ENCODE measurements at regions of chr1 and their contacts with region 1.

Region 1: DNA sequence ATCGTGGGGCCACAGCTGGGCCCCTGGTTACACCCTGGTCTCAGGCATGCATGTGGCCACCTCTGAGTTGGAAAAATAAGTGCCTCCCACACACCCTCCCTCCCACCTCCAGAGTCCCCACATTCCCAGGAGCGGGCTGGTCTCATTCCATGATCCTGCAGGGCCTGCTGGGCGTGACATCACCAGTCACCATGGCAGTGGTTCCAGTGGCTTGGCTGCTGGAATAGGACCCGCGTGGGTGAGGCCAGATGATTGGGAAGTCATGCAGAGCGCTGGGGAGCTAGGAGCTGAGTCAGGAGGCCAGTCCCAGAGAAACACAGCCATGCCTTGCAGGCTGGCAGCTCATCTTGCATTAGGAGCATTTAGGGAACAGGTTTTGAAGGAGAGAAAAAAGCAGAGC is 125.4 kb upstream of the TMEM51 start:
- H3K4me3 ChIP-seq: no peak overlapping the region
- H3K27ac ChIP-seq: no peak overlapping the region
- H3K4me1 ChIP-seq: no peaks in the 10 kb centered on the region
- CTCF ChIP-seq: no peak

Region 2: DNA sequence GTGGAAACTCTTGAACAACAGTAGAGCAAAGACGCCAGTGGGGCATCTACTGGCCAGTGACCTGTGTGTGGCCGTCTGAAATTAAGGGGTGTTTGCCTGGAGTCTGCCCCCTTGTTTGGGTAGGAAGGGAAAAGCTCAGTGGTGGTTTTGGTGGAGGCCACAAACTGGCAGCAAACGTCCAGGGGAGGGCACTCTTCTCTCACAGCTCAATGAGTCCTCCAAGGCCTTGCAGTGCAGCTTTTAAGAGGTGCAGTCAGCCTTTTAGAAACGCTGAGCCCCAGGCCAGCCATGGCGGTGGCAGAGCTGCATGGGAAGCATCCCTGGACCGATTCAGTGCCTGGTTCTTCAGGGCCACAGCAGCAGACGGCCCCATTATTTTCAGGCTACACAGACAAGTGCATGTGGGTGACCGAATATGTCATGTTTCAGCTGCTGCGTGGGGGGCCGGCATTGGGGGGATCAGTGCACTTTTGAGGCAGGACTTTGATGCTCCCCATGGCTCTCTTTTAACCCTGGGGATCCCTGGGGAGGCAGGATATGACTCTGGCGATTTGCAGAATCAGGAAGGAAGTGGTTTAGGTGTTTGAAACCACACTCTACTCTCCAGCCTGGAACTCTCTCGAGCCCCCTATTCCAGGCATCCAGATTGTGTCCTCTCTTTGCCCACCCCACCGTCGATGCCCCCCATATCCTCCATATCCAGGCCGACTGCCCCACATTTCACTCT is 914.1 kb before region 1 on chr1:
- CTCF ChIA-PET with region 1: interaction called, 10 read pairs
- POLR2A ChIA-PET with region 1: no interaction called
- H3K4me3 ChIP-seq: no peak overlapping the region
- H3K27ac ChIP-seq: no peak overlapping the region
- H3K4me1 ChIP-seq: no peaks in the 10 kb centered on the region
- CTCF ChIP-seq: peak; percentile 31; the same call in 1 of the 2 replicates

Region 3: DNA sequence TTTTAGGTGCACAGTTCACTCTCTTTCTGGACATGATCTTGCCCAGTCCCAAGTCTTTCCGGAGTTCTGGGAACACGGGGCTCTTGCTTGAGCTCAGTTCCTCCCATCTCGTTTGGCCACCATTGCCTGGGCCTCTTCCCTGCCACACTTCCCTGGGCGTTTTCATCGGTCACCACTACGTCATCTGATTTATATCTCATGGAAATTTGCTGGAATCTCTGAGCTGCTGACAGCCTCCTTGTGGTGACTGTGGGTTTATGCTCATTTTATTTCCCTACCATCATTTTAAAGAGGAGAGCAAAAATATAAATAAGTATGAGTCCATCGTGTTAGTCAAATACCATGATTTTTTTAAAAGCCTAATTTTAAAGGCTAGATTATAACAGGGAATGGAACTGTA is 878.7 kb before region 1 on chr1:
- CTCF ChIA-PET with region 1: no interaction called
- POLR2A ChIA-PET with region 1: no interaction called
- H3K4me3 ChIP-seq: no peak overlapping the region
- H3K27ac ChIP-seq: no peak overlapping the region
- H3K4me1 ChIP-seq: no peaks in the 10 kb centered on the region
- CTCF ChIP-seq: no peak

Region 4: GRCh38 chr1:14778898-14779865 is 248.9 kb before region 1 on chr1:
- CTCF ChIA-PET with region 1: interaction called, 23 read pairs
- POLR2A ChIA-PET with region 1: no interaction called
- H3K4me3 ChIP-seq: no peak overlapping the region
- H3K27ac ChIP-seq: no peak overlapping the region
- H3K4me1 ChIP-seq: no peaks in the 10 kb centered on the region
- CTCF ChIP-seq: peak; percentile 44; the same call in 1 of the 2 replicates

Region 5: GRCh38 chr1:15014516-15014915 is 13.6 kb before region 1 on chr1:
- CTCF ChIA-PET with region 1: interaction called, 14 read pairs
- POLR2A ChIA-PET with region 1: no interaction called
- H3K4me3 ChIP-seq: no peak overlapping the region
- H3K27ac ChIP-seq: no peak overlapping the region
- H3K4me1 ChIP-seq: no peaks in the 10 kb centered on the region
- CTCF ChIP-seq: no peak

Region 6: DNA sequence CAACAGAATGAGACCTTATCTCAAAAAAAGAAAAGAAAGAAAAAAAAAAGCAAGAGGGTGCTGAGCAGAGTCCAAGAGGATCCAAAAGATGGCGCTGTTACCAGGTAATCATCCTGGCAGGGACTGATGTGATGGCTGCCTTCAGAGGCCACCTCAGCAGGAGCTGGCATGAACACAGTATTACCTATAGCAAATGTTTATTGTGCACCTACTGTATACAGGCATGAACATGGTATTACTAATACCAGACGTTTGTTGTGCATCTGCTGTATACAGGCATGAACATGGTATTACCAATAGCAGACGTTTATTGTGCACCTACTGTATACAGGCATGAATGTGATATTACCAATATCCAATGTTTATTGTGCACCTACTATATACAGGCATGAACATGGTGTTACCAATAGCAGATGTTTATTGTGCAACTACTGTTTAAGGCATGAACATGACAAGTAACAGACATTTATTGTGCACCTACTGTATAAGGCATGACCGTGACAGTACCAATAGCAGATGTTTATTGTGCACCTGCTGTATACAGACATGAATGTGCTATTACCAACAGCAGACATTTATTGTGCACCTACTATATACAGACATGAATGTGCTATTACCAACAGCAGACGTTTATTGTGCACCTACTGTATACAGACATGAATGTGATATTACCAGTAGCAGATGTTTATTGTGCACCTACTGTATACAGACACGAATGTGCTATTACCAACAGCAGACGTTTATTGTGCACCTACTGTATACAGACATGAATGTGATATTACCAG is 10.3 kb after region 1 on chr1:
- CTCF ChIA-PET with region 1: interaction called, 16 read pairs
- POLR2A ChIA-PET with region 1: no interaction called
- H3K4me3 ChIP-seq: no peak overlapping the region
- H3K27ac ChIP-seq: no peak overlapping the region
- H3K4me1 ChIP-seq: no peaks in the 10 kb centered on the region
- CTCF ChIP-seq: 0 out of 2 replicates have a peak, but pooled peaks have one; percentile 19

Region 7: GRCh38 chr1:15110875-15111230 is 82.8 kb after region 1 on chr1:
- CTCF ChIA-PET with region 1: no interaction called
- POLR2A ChIA-PET with region 1: no interaction called
- H3K4me3 ChIP-seq: no peak overlapping the region
- H3K27ac ChIP-seq: no peak overlapping the region
- H3K4me1 ChIP-seq: no peaks in the 10 kb centered on the region
- CTCF ChIP-seq: no peak; the same call in 1 of the 2 replicates

Region 8: GRCh38 chr1:15128520-15129313 is 100.6 kb after region 1 on chr1:
- CTCF ChIA-PET with region 1: no interaction called
- POLR2A ChIA-PET with region 1: no interaction called
- H3K4me3 ChIP-seq: no peak overlapping the region
- H3K27ac ChIP-seq: no peak overlapping the region
- H3K4me1 ChIP-seq: no peaks in the 10 kb centered on the region
- CTCF ChIP-seq: 0 out of 2 replicates have a peak, but pooled peaks have one; percentile 33

Region 9: DNA sequence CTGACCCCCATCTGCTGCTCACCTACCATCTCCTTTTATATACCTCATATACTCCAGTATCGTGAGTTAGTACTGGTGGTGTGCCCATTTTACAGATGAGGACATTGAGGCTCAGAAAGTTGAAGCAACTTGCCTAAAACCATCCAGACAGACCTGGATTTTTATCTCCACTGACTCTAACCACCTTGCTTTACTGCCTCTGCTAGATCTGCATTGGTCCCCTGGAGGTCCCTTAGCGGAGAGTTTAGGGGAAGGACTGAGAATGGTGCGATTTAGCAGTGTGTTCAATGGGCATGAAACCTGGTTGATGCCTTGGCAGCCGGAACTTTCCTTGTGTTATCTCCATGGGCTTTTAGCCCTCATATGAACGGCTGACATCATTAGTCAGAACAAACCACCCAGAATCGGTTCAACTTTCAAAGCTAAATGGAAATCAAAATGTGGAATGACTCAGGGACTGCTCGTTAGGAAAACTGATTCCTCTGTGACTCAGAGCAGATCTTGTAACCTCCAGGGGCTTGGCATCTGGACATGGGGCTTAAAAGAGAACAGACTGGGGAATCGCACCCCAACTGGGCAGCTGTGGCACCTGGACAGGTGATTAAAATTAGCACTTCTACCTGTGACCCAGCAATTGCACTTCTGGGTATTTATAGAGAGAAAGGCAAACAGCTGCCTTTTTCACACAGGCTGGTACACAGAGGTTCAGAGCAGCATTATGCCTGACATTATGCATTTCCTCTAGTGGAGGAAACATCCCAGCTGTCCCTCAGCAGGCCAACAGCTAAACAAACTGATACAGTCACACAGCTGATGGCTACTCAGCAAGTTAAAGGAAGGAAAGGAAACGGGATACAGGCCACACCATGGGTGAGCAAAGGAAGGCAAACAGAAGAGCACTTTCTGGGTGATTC is 150.7 kb after region 1 on chr1:
- CTCF ChIA-PET with region 1: no interaction called
- POLR2A ChIA-PET with region 1: no interaction called
- H3K4me3 ChIP-seq: no peak overlapping the region
- H3K27ac ChIP-seq: no peak overlapping the region
- H3K4me1 ChIP-seq: no peaks in the 10 kb centered on the region; the same call in 1 of the 2 replicates
- CTCF ChIP-seq: no peak